ENCODE measurements at regions of chr1 and their contacts with region 1.

Region 1: GRCh38 chr1:67441183-67441582 is 11.0 kb upstream of the SERBP1 start:
- DNase-seq: peak; percentile 48

Region 2: GRCh38 chr1:67393240-67393639 is 47.9 kb before region 1 on chr1:
- CTCF ChIA-PET with region 1: no interaction called
- POLR2A ChIA-PET with region 1: no interaction called
- DNase-seq: no peak

Region 3: DNA sequence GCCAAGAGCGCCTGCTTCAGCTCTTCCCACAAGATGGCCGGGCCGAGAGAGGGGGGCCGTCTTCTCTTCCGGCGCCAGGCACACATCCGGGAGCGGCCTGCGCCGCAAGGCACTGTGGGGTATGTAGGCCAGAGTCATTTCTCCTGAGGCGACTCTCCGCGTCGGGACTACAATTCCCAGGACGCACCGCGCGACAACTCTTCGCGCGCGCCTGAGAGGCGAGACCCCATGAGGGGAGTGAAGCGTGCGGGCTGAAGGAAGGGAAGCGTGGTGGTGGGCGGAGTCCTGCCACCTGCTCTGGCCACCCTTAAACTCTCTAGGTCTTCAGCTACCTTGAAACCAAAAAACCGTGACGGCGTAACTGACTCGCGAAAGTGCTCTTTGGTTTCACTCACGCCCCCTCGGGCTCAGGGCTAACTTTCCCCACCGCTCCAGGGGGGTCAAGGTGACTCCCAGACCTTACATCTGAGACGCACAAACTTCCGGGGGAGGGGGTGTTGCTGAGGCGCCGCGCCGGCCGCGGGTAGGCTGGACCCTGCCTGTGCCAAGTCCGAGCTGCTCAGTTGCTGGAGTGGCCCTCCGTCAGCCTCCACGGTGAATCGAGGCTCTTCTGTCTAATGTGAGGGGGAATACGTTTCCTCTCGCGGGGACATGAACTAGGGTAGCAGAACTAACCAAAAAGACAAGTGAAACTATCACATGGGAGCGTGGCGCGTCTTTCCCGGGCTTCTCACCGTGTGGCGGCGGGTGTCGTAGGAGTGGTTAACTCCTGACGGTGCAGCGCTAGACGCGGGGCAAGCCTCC is 10.6 kb before region 1 on chr1 and contains the start of gene SERBP1:
- CTCF ChIA-PET with region 1: interaction called, 4 read pairs
- POLR2A ChIA-PET with region 1: interaction called, 36 read pairs
- DNase-seq: peak; percentile 98